CD4-positive, alpha-beta memory T cell (primary cell): ENCODE measurements at regions of chr3 and their contacts with region 1.

Region 1: DNA sequence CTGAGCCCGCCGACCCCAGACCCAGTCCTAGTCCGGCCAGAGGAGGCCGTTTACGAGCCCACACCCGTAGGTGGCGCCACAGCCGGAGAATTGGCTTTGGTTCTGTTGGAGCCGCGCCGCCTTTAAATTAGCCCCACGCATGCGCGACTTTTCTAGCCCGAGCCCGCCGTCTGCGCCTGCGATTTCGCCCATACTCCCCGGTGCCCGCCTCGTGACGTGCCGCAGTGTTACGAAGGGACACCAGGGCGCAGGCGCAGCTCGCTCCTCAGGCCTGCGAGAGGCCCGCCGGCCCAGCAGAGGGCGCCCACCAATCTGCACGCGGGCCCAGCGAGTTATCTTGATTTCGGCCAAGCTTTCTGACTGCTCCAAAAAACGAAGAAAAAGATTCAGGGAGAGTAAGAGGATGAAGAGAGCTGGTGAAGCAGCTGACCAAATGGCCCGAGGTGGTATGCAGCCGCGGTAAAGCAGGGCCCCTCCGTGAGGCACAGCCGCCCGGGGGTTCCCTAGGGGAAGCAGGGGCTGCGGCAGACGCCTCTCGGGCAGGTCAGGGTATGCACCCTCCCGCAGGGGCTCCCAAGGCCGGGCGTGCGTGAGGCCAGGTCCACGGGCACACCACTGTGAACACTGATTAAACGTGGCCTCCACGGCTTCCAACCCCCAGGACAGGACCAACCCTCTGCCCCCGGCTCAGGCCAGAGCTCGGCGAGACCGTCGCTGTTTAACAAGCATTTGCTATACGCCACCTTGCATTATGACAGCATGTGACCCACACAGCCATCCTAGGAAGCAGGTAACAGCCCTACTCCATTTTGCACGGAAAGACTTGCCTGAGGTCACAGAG is 32.8 kb downstream of the RPN1 start:
- DNase-seq: peak; percentile 98 to 99 (median 99)
- H3K4me3 ChIP-seq: peak overlapping the region; percentile 81 to 91
- H3K4me3 Mint-ChIP-seq: peak overlapping the region; percentile 93 to 99 (median 96)
- H3K27ac ChIP-seq: peak overlapping the region; percentile 88
- H3K27ac Mint-ChIP-seq: peak overlapping the region; percentile 93 to 99 (median 98)
- H3K4me1 ChIP-seq: peaks cover 23% of the 10 kb centered on the region
- H3K4me1 Mint-ChIP-seq: peaks cover 17 to 30% (median 23%) of the 10 kb centered on the region in 4 donors
- H3K27me3 ChIP-seq: no peaks in the 10 kb centered on the region
- H3K27me3 Mint-ChIP-seq: no peaks in the 10 kb centered on the region

Region 2: GRCh38 chr3:128607710-128608048 is 10.1 kb before region 1 on chr3:
- CTCF ChIA-PET with region 1: interaction called, 18 read pairs
- POLR2A ChIA-PET with region 1: interaction called, 3 read pairs
- intact Hi-C with region 1: no loop called
- DNase-seq: no peak
- H3K4me3 ChIP-seq: peak overlapping the region in 1 of 2 donors; percentile 57
- H3K4me3 Mint-ChIP-seq: peak overlapping the region in 4 of 8 donors; percentile 26 to 46 (median 33)
- H3K27ac ChIP-seq: no peak overlapping the region
- H3K27ac Mint-ChIP-seq: no peak overlapping the region
- H3K4me1 ChIP-seq: peaks cover 4% of the 10 kb centered on the region
- H3K4me1 Mint-ChIP-seq: peaks cover 0 to 1% (median under 1%) of the 10 kb centered on the region in 4 donors
- H3K27me3 ChIP-seq: peaks cover 5% of the 10 kb centered on the region
- H3K27me3 Mint-ChIP-seq: no peaks in the 10 kb centered on the region

Region 3: GRCh38 chr3:128650096-128651050 is 32.6 kb after region 1 on chr3 and contains the start of gene RPN1:
- CTCF ChIA-PET with region 1: interaction called, 19 read pairs
- POLR2A ChIA-PET with region 1: interaction called, 19 read pairs
- intact Hi-C with region 1: loop called (anchors 1 kb)
- DNase-seq: peak; percentile 96 to 99 (median 97)
- H3K4me3 ChIP-seq: peak within 1 kb of the TSS; percentile 84 to 89
- H3K4me3 Mint-ChIP-seq: peak within 1 kb of the TSS; percentile 85 to 94 (median 88)
- H3K27ac ChIP-seq: peak within 1 kb of the TSS; percentile 92
- H3K27ac Mint-ChIP-seq: peak within 1 kb of the TSS; percentile 88 to 96 (median 93)
- H3K4me1 ChIP-seq: peaks cover 26% of the 10 kb centered on the region
- H3K4me1 Mint-ChIP-seq: peaks cover 24 to 54% (median 34%) of the 10 kb centered on the region in 4 donors
- H3K27me3 ChIP-seq: no peaks in the 10 kb centered on the region
- H3K27me3 Mint-ChIP-seq: no peaks in the 10 kb centered on the region
- total RNA-seq, gene RPN1: 121 to 127 TPM

Region 4: DNA sequence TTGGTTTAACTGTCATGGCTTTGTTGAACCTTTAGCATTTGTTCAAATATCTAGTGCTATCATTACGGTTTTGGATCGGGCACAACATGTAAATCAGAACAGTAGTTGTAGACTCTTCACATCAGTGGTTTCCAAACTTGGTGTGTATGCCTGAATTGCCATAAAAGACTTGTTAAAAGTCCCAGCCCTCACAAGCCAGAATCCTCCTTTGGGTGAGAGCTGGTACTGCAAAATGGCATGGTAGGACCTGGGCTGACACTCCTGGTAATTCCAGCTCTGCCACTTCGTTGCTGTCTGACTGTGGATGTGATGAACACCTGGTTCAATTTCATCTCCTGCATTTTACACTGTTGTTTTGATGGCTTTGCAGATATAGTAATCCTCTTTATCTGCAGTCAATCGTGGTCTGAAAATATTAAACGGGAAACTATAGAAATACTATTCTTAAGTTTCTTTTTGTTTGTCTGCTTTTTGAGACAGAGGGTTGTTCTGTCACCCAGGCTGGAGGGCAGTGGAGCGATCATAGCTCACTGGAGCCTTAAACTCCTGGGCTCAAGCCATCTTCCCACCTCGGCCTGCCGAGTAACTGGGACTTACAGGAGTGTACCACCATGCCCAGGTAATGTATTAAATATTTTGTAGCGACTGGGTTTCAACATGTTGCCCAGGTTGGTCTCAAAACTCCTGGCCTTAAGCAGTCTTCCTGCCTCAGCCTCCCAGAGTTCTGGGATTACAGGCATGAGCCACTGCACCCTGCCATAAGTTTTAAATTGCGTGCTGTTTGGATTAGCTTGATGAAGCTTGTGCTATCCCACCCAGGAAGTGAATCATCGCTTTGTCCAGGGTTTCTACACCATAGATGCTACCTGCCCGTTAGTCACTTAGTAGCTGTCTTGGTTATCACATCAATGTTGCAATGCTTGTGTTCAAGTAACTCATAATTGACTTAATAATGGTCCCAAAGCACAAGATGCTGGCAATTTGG is 169.8 kb after region 1 on chr3:
- CTCF ChIA-PET with region 1: interaction called, 8 read pairs
- POLR2A ChIA-PET with region 1: interaction called, 10 read pairs
- intact Hi-C with region 1: no loop called
- DNase-seq: peak; percentile 39 to 77 (median 43)
- H3K4me3 ChIP-seq: peak overlapping the region; percentile 0 to 57
- H3K4me3 Mint-ChIP-seq: peak overlapping the region; percentile 53 to 90 (median 84)
- H3K27ac ChIP-seq: peak overlapping the region; percentile 48
- H3K27ac Mint-ChIP-seq: peak overlapping the region; percentile 89 to 98 (median 94)
- H3K4me1 ChIP-seq: peaks cover 79% of the 10 kb centered on the region
- H3K4me1 Mint-ChIP-seq: peaks cover 56 to 87% (median 72%) of the 10 kb centered on the region in 4 donors
- H3K27me3 ChIP-seq: no peaks in the 10 kb centered on the region
- H3K27me3 Mint-ChIP-seq: no peaks in the 10 kb centered on the region

Region 5: GRCh38 chr3:128804017-128804810 is 186.4 kb after region 1 on chr3:
- CTCF ChIA-PET with region 1: interaction called, 13 read pairs
- POLR2A ChIA-PET with region 1: interaction called, 5 read pairs
- intact Hi-C with region 1: no loop called
- DNase-seq: peak; percentile 77 to 85 (median 81)
- H3K4me3 ChIP-seq: peak overlapping the region; percentile 26 to 45
- H3K4me3 Mint-ChIP-seq: peak overlapping the region; percentile 78 to 89 (median 84)
- H3K27ac ChIP-seq: peak overlapping the region; percentile 81
- H3K27ac Mint-ChIP-seq: peak overlapping the region; percentile 90 to 97 (median 95)
- H3K4me1 ChIP-seq: peaks cover 68% of the 10 kb centered on the region
- H3K4me1 Mint-ChIP-seq: peaks cover 54 to 78% (median 67%) of the 10 kb centered on the region in 4 donors
- H3K27me3 ChIP-seq: no peaks in the 10 kb centered on the region
- H3K27me3 Mint-ChIP-seq: no peaks in the 10 kb centered on the region

Region 6: GRCh38 chr3:128879125-128879969 is 261.6 kb after region 1 on chr3 and contains the start of gene ACAD9:
- CTCF ChIA-PET with region 1: interaction called, 32 read pairs
- POLR2A ChIA-PET with region 1: interaction called, 10 read pairs
- intact Hi-C with region 1: loop called (anchors 1 kb)
- DNase-seq: peak; percentile 97
- H3K4me3 ChIP-seq: peak within 1 kb of the TSS; percentile 82 to 91
- H3K4me3 Mint-ChIP-seq: peak within 1 kb of the TSS; percentile 85 to 97 (median 94)
- H3K27ac ChIP-seq: peak within 1 kb of the TSS; percentile 92
- H3K27ac Mint-ChIP-seq: peak within 1 kb of the TSS; percentile 92 to 99 (median 99)
- H3K4me1 ChIP-seq: peaks cover 38% of the 10 kb centered on the region
- H3K4me1 Mint-ChIP-seq: peaks cover 47 to 79% (median 61%) of the 10 kb centered on the region in 4 donors
- H3K27me3 ChIP-seq: no peaks in the 10 kb centered on the region
- H3K27me3 Mint-ChIP-seq: no peaks in the 10 kb centered on the region
- total RNA-seq, gene ACAD9: 54.9 to 62.2 TPM

Region 7: GRCh38 chr3:129160891-129161859 is 543.4 kb after region 1 on chr3 and contains the start of gene ISY1:
- CTCF ChIA-PET with region 1: no interaction called
- POLR2A ChIA-PET with region 1: no interaction called
- intact Hi-C with region 1: loop called (anchors 1 kb)
- DNase-seq: peak; percentile 90 to 93 (median 92)
- H3K4me3 ChIP-seq: peak within 1 kb of the TSS; percentile 75 to 94
- H3K4me3 Mint-ChIP-seq: peak within 1 kb of the TSS; percentile 96 to 100 (median 97)
- H3K27ac ChIP-seq: peak within 1 kb of the TSS; percentile 97
- H3K27ac Mint-ChIP-seq: peak within 1 kb of the TSS; percentile 98 to 100 (median 99)
- H3K4me1 ChIP-seq: peaks cover 23% of the 10 kb centered on the region
- H3K4me1 Mint-ChIP-seq: peaks cover 24 to 59% (median 37%) of the 10 kb centered on the region in 4 donors
- H3K27me3 ChIP-seq: no peaks in the 10 kb centered on the region
- H3K27me3 Mint-ChIP-seq: no peaks in the 10 kb centered on the region
- total RNA-seq, gene ISY1: 29.5 to 34.3 TPM